OCI-LY7 (cell line): ENCODE measurements at regions of chr15 and their contacts with region 1.

Region 1: DNA sequence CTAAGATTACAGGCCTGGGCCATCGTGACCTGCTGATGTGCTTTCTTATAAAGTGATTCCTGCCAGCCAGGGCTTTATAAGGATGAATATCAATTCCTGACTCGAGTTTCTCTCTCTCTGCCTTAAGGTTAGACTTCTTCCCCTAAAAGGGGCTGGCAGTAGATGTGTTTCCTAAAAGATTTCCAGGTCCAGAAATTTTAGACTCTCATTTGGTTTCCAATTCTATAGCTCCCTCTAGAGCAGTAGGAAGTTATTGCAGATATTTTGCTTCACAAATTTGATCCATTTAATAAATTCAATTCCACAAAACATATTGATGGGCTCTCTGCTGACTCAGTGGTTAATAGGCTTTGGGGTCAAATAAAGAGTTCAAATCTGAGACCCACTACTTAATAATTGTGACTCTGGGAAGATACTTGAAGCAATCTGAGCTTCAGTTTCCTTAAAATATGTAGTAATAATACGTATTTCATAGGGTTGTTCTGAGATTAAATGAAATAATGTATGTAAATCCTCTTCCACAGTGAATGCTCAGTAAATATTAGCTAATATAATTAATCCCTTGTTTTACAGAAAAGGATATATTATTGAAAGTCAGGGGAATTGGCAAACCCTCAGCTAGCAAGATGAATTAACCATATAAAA is 2.1 kb downstream of the TRIM69 start:
- DNase-seq: peak; percentile 67
- H3K4me3 ChIP-seq: no peak overlapping the region
- H3K27ac ChIP-seq: no peak overlapping the region
- H3K4me1 ChIP-seq: peaks cover 35% of the 10 kb centered on the region
- CTCF ChIP-seq: peak; percentile 99

Region 2: GRCh38 chr15:44147636-44148035 is 590.8 kb before region 1 on chr15:
- CTCF ChIA-PET with region 1: no interaction called
- POLR2A ChIA-PET with region 1: no interaction called
- intact Hi-C with region 1: no loop called
- DNase-seq: no peak
- H3K4me3 ChIP-seq: no peak overlapping the region
- H3K27ac ChIP-seq: no peak overlapping the region
- H3K4me1 ChIP-seq: no peaks in the 10 kb centered on the region
- CTCF ChIP-seq: no peak

Region 3: DNA sequence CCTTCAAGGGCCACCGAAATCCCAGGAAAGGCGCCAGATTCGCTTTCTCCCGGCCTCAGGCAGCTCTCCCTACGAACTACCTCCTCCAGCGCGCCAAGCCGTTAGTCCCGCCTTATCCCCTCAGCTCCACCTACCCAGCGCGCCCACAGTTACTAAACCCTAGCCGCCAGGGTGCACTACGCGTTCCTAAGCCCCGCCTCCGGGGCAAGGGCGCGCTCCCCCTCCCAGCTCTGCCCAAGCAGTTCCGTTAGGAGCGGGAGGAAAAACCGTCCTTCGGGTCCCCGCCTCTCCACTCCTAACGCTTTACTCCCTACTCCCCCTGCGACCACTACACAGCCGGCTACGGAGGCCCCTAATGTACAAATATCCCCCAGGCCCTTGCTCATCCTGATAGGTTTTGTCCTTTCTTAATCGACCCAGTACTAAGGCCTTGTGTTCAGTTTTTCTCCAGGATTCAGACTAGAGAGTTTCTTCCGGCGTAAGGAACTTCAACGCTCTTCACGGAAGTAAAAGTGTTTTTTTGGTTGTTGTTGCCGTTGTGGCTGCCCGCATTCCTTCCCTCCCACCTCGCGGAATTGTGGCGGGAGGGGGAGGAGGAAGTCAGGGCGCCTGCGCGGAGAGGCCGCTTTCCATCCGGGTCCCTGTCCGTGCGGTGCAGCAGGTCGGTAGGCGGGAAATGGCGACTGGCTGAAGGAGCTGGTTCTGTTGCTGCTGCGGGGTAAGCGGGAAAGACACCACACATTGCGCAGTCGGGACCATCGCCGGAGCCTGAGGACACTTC is 311.3 kb before region 1 on chr15 and contains the start of gene CTDSPL2:
- CTCF ChIA-PET with region 1: no interaction called
- POLR2A ChIA-PET with region 1: interaction called, 3 read pairs
- intact Hi-C with region 1: loop called (anchors 5 kb)
- DNase-seq: peak; percentile 96
- H3K4me3 ChIP-seq: peak within 1 kb of the TSS; percentile 84
- H3K27ac ChIP-seq: peak within 1 kb of the TSS; percentile 93
- H3K4me1 ChIP-seq: peaks cover 30% of the 10 kb centered on the region
- CTCF ChIP-seq: no peak; the same call in 1 of the 2 replicates
- total RNA-seq, gene CTDSPL2: 138 and 218 TPM in 2 replicates

Region 4: GRCh38 chr15:44570361-44570760 is 168.1 kb before region 1 on chr15:
- CTCF ChIA-PET with region 1: no interaction called
- POLR2A ChIA-PET with region 1: interaction called, 14 read pairs
- intact Hi-C with region 1: no loop called
- DNase-seq: no peak
- H3K4me3 ChIP-seq: no peak overlapping the region
- H3K27ac ChIP-seq: no peak overlapping the region
- H3K4me1 ChIP-seq: no peaks in the 10 kb centered on the region
- CTCF ChIP-seq: no peak

Region 5: DNA sequence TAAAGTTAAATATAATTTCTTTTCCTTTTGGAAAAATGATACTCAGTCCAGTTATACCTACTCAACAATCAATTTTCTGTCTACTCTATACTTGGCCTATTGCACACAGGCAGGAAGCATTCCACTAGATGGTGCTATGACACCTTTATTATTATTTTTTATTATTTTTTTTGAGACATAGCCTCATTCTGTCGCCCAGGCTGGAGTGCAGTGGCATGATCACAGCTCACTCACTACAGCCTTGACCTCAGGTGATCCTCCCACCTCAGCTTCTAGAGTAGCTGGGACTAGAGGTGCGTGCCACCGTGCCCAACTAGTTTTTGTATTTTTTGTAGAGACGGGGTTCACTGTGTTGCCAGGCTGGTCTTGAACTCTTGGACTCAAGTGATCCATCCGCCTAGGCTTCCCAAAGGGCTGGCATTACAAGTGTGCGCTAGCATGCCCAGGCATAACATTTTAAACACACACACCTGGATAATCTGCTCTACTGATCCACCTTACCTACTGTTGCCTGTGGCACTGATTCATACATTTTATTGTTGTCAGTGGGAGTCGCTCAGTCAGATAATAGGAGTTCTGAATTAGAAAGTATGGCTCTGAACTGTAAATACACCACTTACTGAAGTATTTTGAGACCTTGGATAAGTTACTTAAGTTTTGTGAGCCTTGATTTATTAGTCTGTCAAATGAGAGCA is 145.3 kb before region 1 on chr15:
- CTCF ChIA-PET with region 1: interaction called, 6 read pairs
- POLR2A ChIA-PET with region 1: interaction called, 5 read pairs
- intact Hi-C with region 1: loop called (anchors 1 kb)
- DNase-seq: peak; percentile 59
- H3K4me3 ChIP-seq: no peak overlapping the region
- H3K27ac ChIP-seq: no peak overlapping the region
- H3K4me1 ChIP-seq: no peaks in the 10 kb centered on the region
- CTCF ChIP-seq: peak; percentile 84

Region 6: DNA sequence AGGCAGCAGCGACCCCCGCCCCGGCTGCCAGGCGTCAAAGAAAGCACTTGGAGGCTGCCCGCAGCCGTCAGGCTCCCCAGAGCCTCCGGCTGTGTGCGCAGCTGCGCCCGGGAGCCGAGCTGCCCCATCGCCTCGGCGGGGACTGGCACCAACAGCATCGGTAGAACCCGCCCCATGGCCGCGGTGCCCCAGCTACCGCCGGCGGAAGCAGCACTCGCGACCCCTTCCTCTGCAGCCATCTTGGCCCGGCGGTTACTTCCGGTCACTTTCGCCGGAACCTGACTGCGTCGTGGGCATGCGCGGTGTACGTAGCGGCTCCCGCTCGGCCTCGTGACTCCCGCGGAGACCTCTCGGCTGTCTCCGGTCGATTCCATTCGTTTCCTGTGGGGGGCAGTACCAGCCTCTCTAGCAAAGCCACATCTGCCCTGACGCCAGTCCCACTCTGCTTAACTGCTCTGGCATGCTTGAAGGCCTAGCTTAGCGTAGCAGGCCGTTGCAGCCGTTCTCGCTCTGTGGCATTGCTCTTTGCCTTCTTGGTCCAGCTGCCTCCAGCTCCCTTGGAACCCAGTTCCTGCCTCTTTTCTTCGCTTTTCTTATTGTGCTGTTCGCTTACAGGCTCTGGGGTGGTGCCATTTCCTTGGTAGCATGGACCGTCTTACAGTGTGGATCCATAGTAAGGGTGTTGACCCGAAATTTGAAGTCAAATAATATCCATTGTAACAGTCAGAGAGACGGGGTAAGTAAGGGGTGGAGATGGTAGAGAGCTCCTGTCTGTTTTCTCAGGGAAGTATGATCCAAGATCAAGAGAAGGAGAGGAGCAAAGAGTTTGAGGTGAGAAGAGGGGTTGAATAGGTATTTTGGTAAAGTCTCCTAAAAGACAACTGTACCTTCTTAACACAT is 74.8 kb before region 1 on chr15 and contains the start of gene SPG11:
- CTCF ChIA-PET with region 1: interaction called, 15 read pairs
- POLR2A ChIA-PET with region 1: interaction called, 68 read pairs
- intact Hi-C with region 1: loop called (anchors 1 kb)
- DNase-seq: peak; percentile 99
- H3K4me3 ChIP-seq: peak within 1 kb of the TSS; percentile 79
- H3K27ac ChIP-seq: peak within 1 kb of the TSS; percentile 89
- H3K4me1 ChIP-seq: peaks cover 52% of the 10 kb centered on the region
- CTCF ChIP-seq: peak; percentile 83
- total RNA-seq, gene SPG11: 65.2 and 69.1 TPM in 2 replicates

Region 7: DNA sequence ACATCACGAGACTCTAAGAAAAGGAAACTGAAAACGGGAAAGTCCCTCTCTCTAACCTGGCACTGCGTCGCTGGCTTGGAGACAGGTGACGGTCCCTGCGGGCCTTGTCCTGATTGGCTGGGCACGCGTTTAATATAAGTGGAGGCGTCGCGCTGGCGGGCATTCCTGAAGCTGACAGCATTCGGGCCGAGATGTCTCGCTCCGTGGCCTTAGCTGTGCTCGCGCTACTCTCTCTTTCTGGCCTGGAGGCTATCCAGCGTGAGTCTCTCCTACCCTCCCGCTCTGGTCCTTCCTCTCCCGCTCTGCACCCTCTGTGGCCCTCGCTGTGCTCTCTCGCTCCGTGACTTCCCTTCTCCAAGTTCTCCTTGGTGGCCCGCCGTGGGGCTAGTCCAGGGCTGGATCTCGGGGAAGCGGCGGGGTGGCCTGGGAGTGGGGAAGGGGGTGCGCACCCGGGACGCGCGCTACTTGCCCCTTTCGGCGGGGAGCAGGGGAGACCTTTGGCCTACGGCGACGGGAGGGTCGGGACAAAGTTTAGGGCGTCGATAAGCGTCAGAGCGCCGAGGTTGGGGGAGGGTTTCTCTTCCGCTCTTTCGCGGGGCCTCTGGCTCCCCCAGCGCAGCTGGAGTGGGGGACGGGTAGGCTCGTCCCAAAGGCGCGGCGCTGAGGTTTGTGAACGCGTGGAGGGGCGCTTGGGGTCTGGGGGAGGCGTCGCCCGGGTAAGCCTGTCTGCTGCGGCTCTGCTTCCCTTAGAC is 26.9 kb before region 1 on chr15 and contains the start of gene B2M:
- CTCF ChIA-PET with region 1: interaction called, 10 read pairs
- POLR2A ChIA-PET with region 1: interaction called, 72 read pairs
- intact Hi-C with region 1: loop called (anchors 2 kb)
- DNase-seq: peak; percentile 96
- H3K4me3 ChIP-seq: peak within 1 kb of the TSS; percentile 89
- H3K27ac ChIP-seq: peak within 1 kb of the TSS; percentile 91
- H3K4me1 ChIP-seq: peaks cover 44% of the 10 kb centered on the region
- CTCF ChIP-seq: no peak
- total RNA-seq, gene B2M: 1,738 and 1,761 TPM in 2 replicates

Region 8: GRCh38 chr15:45884755-45885445 is 1146.4 kb after region 1 on chr15:
- CTCF ChIA-PET with region 1: no interaction called
- POLR2A ChIA-PET with region 1: no interaction called
- intact Hi-C with region 1: no loop called
- DNase-seq: no peak
- H3K4me3 ChIP-seq: no peak overlapping the region
- H3K27ac ChIP-seq: no peak overlapping the region
- H3K4me1 ChIP-seq: no peaks in the 10 kb centered on the region
- CTCF ChIP-seq: no peak